Activated CD4-positive, alpha-beta memory T cell treated with anti-CD3 and anti-CD28 coated beads for 36 hours (primary cell): ENCODE measurements at regions of chr16 and their contacts with region 1.

Region 1: DNA sequence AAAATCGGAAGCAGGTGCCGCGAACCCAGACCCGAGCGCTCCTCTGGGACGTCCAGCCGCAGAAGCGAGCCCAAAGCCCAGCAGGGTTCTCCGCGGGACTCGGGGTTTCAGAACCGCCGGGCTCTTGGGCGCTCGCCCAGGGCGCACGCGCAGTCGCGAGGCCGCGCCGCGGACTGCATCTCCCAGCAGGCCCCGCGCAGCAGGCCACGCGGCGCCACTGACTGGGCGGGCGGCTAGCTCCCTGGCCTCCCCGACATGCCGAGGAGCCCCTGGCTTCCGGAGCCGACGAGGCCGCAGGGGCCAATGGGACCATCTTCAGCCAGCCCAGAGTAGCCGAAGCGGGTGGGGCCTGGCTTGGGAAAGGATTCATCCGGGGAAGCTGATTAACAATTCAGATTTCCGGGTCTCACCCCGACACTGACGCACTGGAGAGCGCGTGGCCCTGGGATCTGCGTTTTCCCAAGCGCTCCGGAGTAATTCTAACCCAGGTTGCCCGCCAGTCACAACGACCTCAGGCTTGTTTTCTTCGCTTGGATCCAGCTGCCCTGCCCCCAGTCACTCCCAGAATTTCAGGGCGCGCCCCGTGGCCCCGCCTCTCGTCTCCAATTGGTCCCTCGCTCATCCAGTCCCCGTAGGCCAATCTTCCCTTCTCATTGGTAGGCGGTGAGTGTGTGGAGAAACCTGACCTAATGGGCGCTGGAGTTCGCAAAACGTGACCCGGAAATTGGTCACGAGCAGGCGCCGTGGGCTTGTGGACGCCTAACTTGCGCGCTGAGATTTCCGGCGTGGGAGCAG is at the start of gene ZNF263:
- DNase-seq: peak; percentile 96
- H3K4me3 Mint-ChIP-seq: peak within 1 kb of the TSS; percentile 91
- H3K27ac Mint-ChIP-seq: peak within 1 kb of the TSS; percentile 99
- H3K4me1 Mint-ChIP-seq: peaks cover 31% of the 10 kb centered on the region
- H3K27me3 Mint-ChIP-seq: no peaks in the 10 kb centered on the region
- total RNA-seq, gene ZNF263: 13.2 to 13.5 TPM

Region 2: DNA sequence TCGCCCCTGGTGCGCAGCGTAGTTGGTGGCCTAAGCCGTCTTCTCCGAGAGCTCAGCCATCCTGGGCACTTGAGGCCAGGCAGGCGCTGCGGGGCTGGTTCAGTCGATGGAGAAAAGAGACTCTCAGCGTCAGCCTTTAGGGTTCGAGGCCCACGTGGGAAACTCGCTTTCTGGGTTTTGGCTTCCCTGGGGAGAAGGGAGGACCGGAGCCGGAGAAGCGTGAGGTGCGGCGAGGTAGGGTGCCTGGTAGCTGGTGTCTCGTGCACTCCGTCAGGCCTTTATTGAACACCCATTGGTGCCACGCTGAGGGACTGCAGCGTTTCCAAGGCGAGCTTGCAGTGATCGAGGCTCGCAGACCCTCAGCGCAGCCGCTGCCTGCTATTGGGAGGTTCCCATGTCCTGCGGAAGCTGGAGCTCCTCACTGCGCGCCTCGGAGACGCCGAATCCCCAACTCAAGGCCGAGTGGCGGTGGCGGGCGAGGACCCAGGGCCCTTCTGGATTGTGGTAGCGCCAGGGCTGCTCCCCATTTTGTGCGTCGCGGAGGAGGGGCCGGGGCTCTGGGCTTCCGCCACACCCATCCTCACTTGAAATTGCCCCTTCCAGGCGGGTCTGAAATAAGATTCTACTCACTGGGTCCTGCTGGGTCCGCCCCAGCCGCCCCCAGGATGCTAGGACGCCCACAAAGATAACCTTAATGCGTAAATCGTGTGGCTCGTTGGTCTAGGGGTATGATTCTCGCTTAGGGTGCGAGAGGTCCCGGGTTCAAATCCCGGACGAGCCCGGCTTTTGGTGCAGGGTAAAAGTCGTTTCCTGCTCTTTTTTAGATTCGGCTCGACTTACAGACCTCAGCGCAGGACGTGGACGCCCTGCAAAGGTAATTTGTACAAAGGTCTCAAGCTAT is 93.8 kb before region 1 on chr16:
- CTCF ChIA-PET with region 1: interaction called, 7 read pairs
- POLR2A ChIA-PET with region 1: no interaction called
- intact Hi-C with region 1: loop called (anchors 2 kb)
- DNase-seq: peak; percentile 79
- H3K4me3 Mint-ChIP-seq: peak overlapping the region; percentile 69
- H3K27ac Mint-ChIP-seq: peak overlapping the region; percentile 70
- H3K4me1 Mint-ChIP-seq: peaks cover 46% of the 10 kb centered on the region
- H3K27me3 Mint-ChIP-seq: peaks cover 67% of the 10 kb centered on the region

Region 3: GRCh38 chr16:3234543-3235541 is 48.1 kb before region 1 on chr16 and contains the start of gene ZNF200:
- CTCF ChIA-PET with region 1: no interaction called
- POLR2A ChIA-PET with region 1: no interaction called
- intact Hi-C with region 1: loop called (anchors 1 kb)
- DNase-seq: peak; percentile 97
- H3K4me3 Mint-ChIP-seq: peak within 1 kb of the TSS; percentile 83
- H3K27ac Mint-ChIP-seq: peak within 1 kb of the TSS; percentile 92
- H3K4me1 Mint-ChIP-seq: peaks cover 30% of the 10 kb centered on the region
- H3K27me3 Mint-ChIP-seq: no peaks in the 10 kb centered on the region
- total RNA-seq, gene ZNF200: 10.6 to 11.5 TPM

Region 4: GRCh38 chr16:3400779-3401688 is 118.1 kb after region 1 on chr16 and contains the starts of genes ZNF174 and ZSCAN32:
- CTCF ChIA-PET with region 1: interaction called, 6 read pairs
- POLR2A ChIA-PET with region 1: interaction called, 22 read pairs
- intact Hi-C with region 1: loop called (anchors 1 kb)
- DNase-seq: peak; percentile 100
- H3K4me3 Mint-ChIP-seq: peak within 1 kb of the TSS; percentile 88
- H3K27ac Mint-ChIP-seq: peak within 1 kb of the TSS; percentile 83
- H3K4me1 Mint-ChIP-seq: peaks cover 52% of the 10 kb centered on the region
- H3K27me3 Mint-ChIP-seq: no peaks in the 10 kb centered on the region
- total RNA-seq, gene ZNF174: 6.0 to 7.3 TPM
- total RNA-seq, gene ZSCAN32: 10.9 to 11.9 TPM

Region 5: DNA sequence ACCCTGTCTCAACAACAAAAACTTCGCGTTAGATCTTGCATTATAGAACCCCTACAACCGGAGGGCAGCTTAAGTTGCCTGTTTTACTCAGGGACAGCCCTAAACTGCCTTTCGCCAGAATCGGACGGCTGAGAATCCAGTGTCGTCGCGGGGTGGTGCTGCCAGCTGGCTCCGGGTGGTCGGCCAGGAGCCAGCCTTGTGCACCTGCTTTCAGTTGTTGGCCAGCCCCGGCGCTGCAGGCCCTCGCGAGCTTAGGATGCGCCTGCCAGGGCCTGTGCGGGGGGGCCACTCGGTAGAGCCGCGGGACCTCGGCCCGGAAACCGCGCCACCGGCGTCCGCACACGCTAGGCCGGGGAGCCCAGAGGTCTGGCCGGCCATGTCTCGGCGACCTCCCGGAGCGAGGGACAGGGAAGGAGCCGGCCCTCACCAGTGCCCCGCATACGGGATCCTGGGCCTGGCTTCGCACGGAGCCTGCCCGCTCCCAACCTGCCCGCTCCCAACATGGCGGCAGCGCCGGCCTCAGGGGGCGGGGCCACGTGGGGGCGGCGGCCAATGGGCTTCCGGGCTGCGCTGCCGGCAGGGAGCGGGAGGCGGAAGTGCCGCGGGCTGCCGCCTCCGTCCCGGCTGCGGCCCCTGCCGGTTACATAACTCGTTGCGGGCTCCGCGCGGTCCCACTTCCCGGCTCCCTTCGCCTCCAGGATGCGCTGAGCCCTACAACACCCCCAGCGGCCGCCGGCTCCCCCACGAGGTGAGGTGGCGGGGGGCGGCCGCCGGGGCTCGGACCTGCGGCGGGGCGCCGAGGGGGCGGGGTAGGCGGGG is 174.7 kb after region 1 on chr16:
- CTCF ChIA-PET with region 1: no interaction called
- POLR2A ChIA-PET with region 1: no interaction called
- intact Hi-C with region 1: loop called (anchors 5 kb)
- DNase-seq: peak; percentile 92
- H3K4me3 Mint-ChIP-seq: peak overlapping the region; percentile 80
- H3K27ac Mint-ChIP-seq: peak overlapping the region; percentile 90
- H3K4me1 Mint-ChIP-seq: peaks cover 41% of the 10 kb centered on the region
- H3K27me3 Mint-ChIP-seq: no peaks in the 10 kb centered on the region

Region 6: DNA sequence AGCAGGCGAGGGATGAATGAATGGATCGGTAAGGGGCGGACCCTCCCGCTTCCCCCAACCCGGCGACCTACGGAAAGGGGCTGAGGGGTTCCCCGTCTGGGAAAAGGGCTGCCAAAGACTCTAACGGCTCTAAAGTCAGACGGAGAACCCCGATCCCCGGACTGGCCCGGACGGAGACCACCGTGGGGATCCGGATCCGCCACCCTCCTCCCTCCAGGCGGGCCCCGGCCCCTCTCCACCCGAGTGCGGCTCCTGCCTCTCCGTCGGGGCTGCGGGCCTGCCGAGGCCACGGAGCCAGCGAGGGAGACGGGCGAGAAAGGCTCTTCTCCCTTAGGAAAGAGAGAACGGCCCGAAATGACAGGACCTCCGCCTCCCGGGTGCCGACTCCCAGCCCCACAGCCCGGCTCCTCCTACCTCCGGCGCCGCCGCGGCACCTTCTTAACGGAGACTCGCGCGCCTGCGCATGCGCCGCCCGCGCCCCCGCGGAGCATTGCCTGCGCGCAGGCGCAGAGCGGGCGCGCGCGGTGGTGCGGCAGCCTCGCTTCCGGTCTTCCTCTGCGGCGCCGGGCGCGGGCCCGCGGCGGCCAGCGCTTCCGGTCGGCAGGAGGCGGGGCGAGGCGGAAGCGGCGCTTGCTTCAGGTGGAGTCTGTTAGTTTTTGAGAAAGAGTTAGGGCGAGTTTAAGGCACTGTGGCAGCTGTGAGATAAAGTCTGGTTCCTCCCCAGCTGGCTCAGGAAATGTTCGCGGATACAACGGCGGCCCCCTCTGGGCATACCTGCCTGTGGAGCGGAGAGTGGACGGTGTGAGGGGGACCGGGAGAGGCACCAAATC is 328.4 kb after region 1 on chr16 and contains the start of gene SLX4:
- CTCF ChIA-PET with region 1: no interaction called
- POLR2A ChIA-PET with region 1: no interaction called
- intact Hi-C with region 1: loop called (anchors 1 kb)
- DNase-seq: peak; percentile 94
- H3K4me3 Mint-ChIP-seq: peak within 1 kb of the TSS; percentile 95
- H3K27ac Mint-ChIP-seq: peak within 1 kb of the TSS; percentile 89
- H3K4me1 Mint-ChIP-seq: peaks cover 43% of the 10 kb centered on the region
- H3K27me3 Mint-ChIP-seq: no peaks in the 10 kb centered on the region
- total RNA-seq, gene SLX4: 13.4 to 15.3 TPM